Heart left ventricle (tissue), 16 donors: ENCODE measurements at regions of chr15 and their contacts with region 1.

Region 1: GRCh38 chr15:44971036-44971435 is 14.5 kb downstream of the TERB2 start:
- DNase-seq: no peak
- ATAC-seq: no peak
- H3K4me3 ChIP-seq: no peak overlapping the region
- H3K27ac ChIP-seq: no peak overlapping the region
- H3K4me1 ChIP-seq: no peaks in the 10 kb centered on the region
- H3K27me3 ChIP-seq: peaks cover 0 to 10% (median 0%) of the 10 kb centered on the region in 9 donors
- CTCF ChIP-seq: no peak
- POLR2A ChIP-seq: no peak

Region 2: DNA sequence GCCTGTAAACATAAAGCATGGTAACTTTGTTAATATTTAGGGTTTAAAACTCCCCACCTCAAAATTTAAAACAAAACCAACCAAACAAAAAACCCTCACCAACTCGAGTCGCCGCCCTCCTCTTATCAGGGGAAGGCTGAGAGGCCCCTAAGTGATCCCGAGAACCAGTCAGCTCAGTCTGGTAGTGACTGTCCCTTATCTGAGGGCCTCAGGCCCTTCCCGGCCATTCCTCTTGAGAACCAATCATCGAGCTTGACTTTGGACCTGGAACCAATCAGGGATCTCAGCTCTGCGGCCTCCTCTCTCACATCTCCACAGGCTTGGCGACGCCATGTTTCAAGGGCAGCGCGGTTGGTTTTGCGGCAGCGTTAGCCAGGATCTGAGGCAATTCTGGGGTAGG is 14.6 kb before region 1 on chr15 and contains the start of gene TERB2:
- intact Hi-C with region 1: no loop called
- DNase-seq: no peak
- ATAC-seq: no peak
- H3K4me3 ChIP-seq: no peak within 1 kb of the TSS
- H3K27ac ChIP-seq: no peak within 1 kb of the TSS
- H3K4me1 ChIP-seq: no peaks in the 10 kb centered on the region
- H3K27me3 ChIP-seq: peaks cover 0 to 5% (median 0%) of the 10 kb centered on the region in 9 donors
- CTCF ChIP-seq: no peak
- POLR2A ChIP-seq: no peak
- total RNA-seq, gene TERB2: not detected

Region 3: DNA sequence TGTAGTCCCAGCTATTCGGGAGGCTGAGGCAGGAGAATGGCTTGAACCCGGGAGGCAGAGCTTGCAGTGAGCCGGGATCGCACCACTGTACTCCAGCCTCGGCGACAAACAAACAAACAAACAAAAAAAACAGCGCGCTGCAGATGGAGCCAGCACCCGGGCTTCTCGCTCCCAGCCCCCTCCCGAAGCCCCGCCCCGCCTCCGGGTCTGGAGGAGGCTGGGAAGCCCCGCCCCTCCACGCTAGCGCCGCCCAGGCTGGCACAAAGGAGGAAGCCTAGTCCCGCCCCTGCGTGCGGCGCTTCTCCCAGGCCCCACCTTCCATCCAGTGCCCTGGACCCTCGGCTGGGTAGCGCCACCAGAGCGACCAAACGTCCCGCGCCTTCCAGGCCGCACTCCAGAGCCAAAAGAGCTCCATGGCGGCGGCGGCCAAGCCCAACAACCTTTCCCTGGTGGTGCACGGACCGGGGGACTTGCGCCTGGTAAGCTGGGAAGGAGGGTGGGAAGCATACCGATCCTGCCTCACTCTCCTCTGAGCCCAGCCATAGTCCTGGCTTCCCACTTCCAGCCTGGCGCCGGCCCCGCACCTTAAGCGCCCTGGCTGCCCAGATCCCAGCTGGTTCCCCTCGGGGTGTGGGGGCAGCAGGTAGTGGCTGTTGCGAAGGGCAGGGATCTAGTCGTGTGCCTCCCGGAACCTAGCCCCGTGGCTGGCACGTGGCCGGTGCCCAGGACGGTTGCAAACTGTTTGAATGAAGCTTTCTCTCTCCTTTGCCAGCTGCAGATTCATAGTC is 52.0 kb after region 1 on chr15 and contains the start of gene SORD:
- intact Hi-C with region 1: loop called in 1 of 10 experiments (anchors 10 kb)
- DNase-seq: peak; percentile 93 to 97 (median 94)
- ATAC-seq: peak; percentile 97 to 100 (median 100)
- H3K4me3 ChIP-seq: peak within 1 kb of the TSS; percentile 38 to 84 (median 68)
- H3K27ac ChIP-seq: peak within 1 kb of the TSS in 11 of 12 donors; percentile 52 to 78 (median 70)
- H3K4me1 ChIP-seq: peaks cover 0 to 24% (median 12%) of the 10 kb centered on the region in 12 donors
- H3K27me3 ChIP-seq: peaks cover 0 to 18% (median 0%) of the 10 kb centered on the region in 9 donors
- CTCF ChIP-seq: peak in 1 of 12 donors; percentile 5
- POLR2A ChIP-seq: peak in 1 of 2 donors; percentile 45
- total RNA-seq, gene SORD: 5.7 to 16.7 (median 11.0) TPM

Region 4: GRCh38 chr15:45037936-45038335 is 66.9 kb after region 1 on chr15:
- intact Hi-C with region 1: loop called in 8 of 10 experiments (anchors 2 to 5 kb)
- DNase-seq: no peak
- ATAC-seq: no peak
- H3K4me3 ChIP-seq: no peak overlapping the region
- H3K27ac ChIP-seq: no peak overlapping the region
- H3K4me1 ChIP-seq: peaks cover 0 to 6% (median 0%) of the 10 kb centered on the region in 12 donors
- H3K27me3 ChIP-seq: no peaks in the 10 kb centered on the region
- CTCF ChIP-seq: no peak
- POLR2A ChIP-seq: no peak